Psoas muscle (tissue), 8 donors: ENCODE measurements at regions of chr2 and their contacts with region 1.

Region 1: GRCh38 chr2:171913517-171913916 is 8.7 kb upstream of the HAT1 start:
- DNase-seq: no peak
- ATAC-seq: peak in 2 of 4 donors; percentile 39 to 52
- H3K4me3 ChIP-seq: no peak overlapping the region
- H3K27ac ChIP-seq: peak overlapping the region; percentile 56
- H3K4me1 ChIP-seq: peaks cover 15% of the 10 kb centered on the region
- H3K27me3 ChIP-seq: no peaks in the 10 kb centered on the region
- CTCF ChIP-seq: no peak

Region 2: GRCh38 chr2:171902840-171903420 is 10.6 kb before region 1 on chr2:
- intact Hi-C with region 1: loop called in 1 of 2 experiments (anchors 1 kb)
- DNase-seq: no peak
- ATAC-seq: peak; percentile 77 to 94 (median 86)
- H3K4me3 ChIP-seq: no peak overlapping the region
- H3K27ac ChIP-seq: no peak overlapping the region
- H3K4me1 ChIP-seq: no peaks in the 10 kb centered on the region
- H3K27me3 ChIP-seq: no peaks in the 10 kb centered on the region
- CTCF ChIP-seq: no peak